HCT116 (cell line): ENCODE measurements at regions of chr20 and their contacts with region 1.

Region 1: GRCh38 chr20:20824924-20825584 is 112.6 kb upstream of the RALGAPA2 start:
- DNase-seq: no peak
- ATAC-seq: peak; percentile 80
- H3K4me3 ChIP-seq: no peak overlapping the region
- H3K27ac ChIP-seq: no peak overlapping the region
- H3K4me1 ChIP-seq: 0 out of 4 replicates have a peak, but pooled peaks cover 0 to 5% of the 10 kb centered on the region in 2 experiments
- H3K27me3 ChIP-seq: peaks cover 10% of the 10 kb centered on the region; the same call in 1 of the 2 replicates
- CTCF ChIP-seq: peak; percentile 59 to 83 (median 78); a peak in 5 of 6 replicates
- POLR2A ChIP-seq: no peak
- RAD21 ChIP-seq: peak; percentile 65

Region 2: GRCh38 chr20:20334489-20334888 is 490.6 kb before region 1 on chr20:
- CTCF ChIA-PET with region 1: no interaction called
- POLR2A ChIA-PET with region 1: no interaction called
- RAD21 ChIA-PET with region 1: no interaction called
- intact Hi-C with region 1: no loop called
- DNase-seq: no peak
- ATAC-seq: no peak
- H3K4me3 ChIP-seq: no peak overlapping the region
- H3K27ac ChIP-seq: no peak overlapping the region
- H3K4me1 ChIP-seq: no peaks in the 10 kb centered on the region
- H3K27me3 ChIP-seq: peaks cover 12% of the 10 kb centered on the region; the same call in 1 of the 2 replicates
- CTCF ChIP-seq: no peak
- POLR2A ChIP-seq: no peak
- RAD21 ChIP-seq: no peak

Region 3: GRCh38 chr20:20593447-20594170 is 231.4 kb before region 1 on chr20:
- CTCF ChIA-PET with region 1: interaction called, 5 read pairs
- POLR2A ChIA-PET with region 1: no interaction called
- RAD21 ChIA-PET with region 1: no interaction called
- intact Hi-C with region 1: loop called (anchors 10 kb)
- DNase-seq: peak; percentile 18
- ATAC-seq: peak; percentile 80
- H3K4me3 ChIP-seq: no peak overlapping the region
- H3K27ac ChIP-seq: no peak overlapping the region
- H3K4me1 ChIP-seq: no peaks in the 10 kb centered on the region
- H3K27me3 ChIP-seq: no peaks in the 10 kb centered on the region
- CTCF ChIP-seq: peak in 2 of 3 experiments; percentile 74 to 77
- POLR2A ChIP-seq: no peak
- RAD21 ChIP-seq: peak; percentile 35; the same call in 1 of the 2 replicates

Region 4: GRCh38 chr20:20664795-20665589 is 160.1 kb before region 1 on chr20:
- CTCF ChIA-PET with region 1: interaction called, 10 read pairs
- POLR2A ChIA-PET with region 1: no interaction called
- RAD21 ChIA-PET with region 1: no interaction called
- intact Hi-C with region 1: loop called (anchors 1 kb)
- DNase-seq: peak; percentile 18
- ATAC-seq: peak; percentile 90
- H3K4me3 ChIP-seq: no peak overlapping the region
- H3K27ac ChIP-seq: no peak overlapping the region
- H3K4me1 ChIP-seq: no peaks in the 10 kb centered on the region
- H3K27me3 ChIP-seq: no peaks in the 10 kb centered on the region
- CTCF ChIP-seq: peak; percentile 38 to 52 (median 44); a peak in 5 of 6 replicates
- POLR2A ChIP-seq: no peak
- RAD21 ChIP-seq: peak; percentile 62

Region 5: DNA sequence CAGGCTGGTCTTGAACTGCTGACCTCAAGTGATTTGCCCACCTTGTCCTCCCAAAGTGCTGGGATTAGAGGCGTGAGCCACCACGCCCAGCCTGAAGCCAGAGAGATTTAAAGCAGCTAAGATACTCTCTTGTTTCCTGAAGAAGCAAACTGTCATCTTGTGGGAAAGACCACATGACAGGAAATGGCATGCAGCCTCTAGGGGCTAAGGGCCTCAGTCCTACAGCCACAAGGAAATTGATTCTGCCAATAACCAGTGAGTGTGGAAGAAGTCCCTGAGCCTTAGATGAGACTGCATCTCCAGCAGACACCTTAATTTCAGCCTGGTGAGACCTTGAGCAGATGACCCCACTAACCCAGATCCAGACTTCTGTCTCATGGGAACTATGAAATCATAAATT is 341.7 kb after region 1 on chr20:
- CTCF ChIA-PET with region 1: no interaction called
- POLR2A ChIA-PET with region 1: no interaction called
- RAD21 ChIA-PET with region 1: no interaction called
- intact Hi-C with region 1: no loop called
- DNase-seq: no peak
- ATAC-seq: no peak
- H3K4me3 ChIP-seq: no peak overlapping the region
- H3K27ac ChIP-seq: no peak overlapping the region
- H3K4me1 ChIP-seq: no peaks in the 10 kb centered on the region
- H3K27me3 ChIP-seq: no peaks in the 10 kb centered on the region
- CTCF ChIP-seq: no peak
- POLR2A ChIP-seq: no peak
- RAD21 ChIP-seq: no peak

Region 6: DNA sequence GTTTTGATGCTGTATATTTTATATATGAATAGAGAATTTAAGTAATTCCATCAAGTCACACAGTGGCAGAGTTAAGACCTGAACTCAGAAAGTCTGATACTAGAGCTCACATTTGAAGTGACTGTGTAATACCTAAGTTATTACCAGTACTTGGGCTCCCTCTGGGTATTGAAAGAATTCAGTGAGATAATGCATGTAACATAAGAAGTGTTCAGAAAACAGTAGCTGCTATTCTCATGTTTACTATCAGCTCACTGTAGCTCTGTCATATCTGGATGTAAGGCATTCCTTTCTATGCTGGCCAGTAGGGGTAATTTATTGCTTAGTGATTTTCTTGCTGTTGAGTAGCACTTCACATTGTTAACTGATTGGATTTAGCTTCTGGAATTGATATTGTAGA is 527.6 kb after region 1 on chr20:
- CTCF ChIA-PET with region 1: no interaction called
- POLR2A ChIA-PET with region 1: no interaction called
- RAD21 ChIA-PET with region 1: no interaction called
- intact Hi-C with region 1: no loop called
- DNase-seq: no peak
- ATAC-seq: no peak
- H3K4me3 ChIP-seq: no peak overlapping the region
- H3K27ac ChIP-seq: no peak overlapping the region
- H3K4me1 ChIP-seq: no peaks in the 10 kb centered on the region
- H3K27me3 ChIP-seq: no peaks in the 10 kb centered on the region
- CTCF ChIP-seq: no peak
- POLR2A ChIP-seq: no peak
- RAD21 ChIP-seq: no peak